Activated T-helper 1 cell treated with anti-CD3 and anti-CD28 coated beads, Interleukin-12 subunit alpha, Interleukin-12 subunit beta, Interleukin-2, Interleukin-4 antibody, amounts not matched to agents 30 ng/mL and 10 ng/mL and 1 ng/mL, durations not matched to agents 14 hours and 24 hours and 36 hours (primary cell): ENCODE measurements at regions of chr3 and their contacts with region 1.

Region 1: GRCh38 chr3:186953011-186953487 is 22.7 kb downstream of the ST6GAL1 start:
- DNase-seq: peak; percentile 16
- H3K4me3 Mint-ChIP-seq: peak overlapping the region; percentile 59
- H3K27ac Mint-ChIP-seq: peak overlapping the region; percentile 89
- H3K4me1 Mint-ChIP-seq: peaks cover 83% of the 10 kb centered on the region
- H3K27me3 Mint-ChIP-seq: no peaks in the 10 kb centered on the region

Region 2: GRCh38 chr3:185813691-185814215 is 1139.3 kb before region 1 on chr3:
- intact Hi-C with region 1: no loop called
- DNase-seq: no peak
- H3K4me3 Mint-ChIP-seq: no peak overlapping the region
- H3K27ac Mint-ChIP-seq: no peak overlapping the region
- H3K4me1 Mint-ChIP-seq: no peaks in the 10 kb centered on the region
- H3K27me3 Mint-ChIP-seq: peaks cover 47% of the 10 kb centered on the region

Region 3: GRCh38 chr3:186985661-186986364 is 32.8 kb after region 1 on chr3:
- intact Hi-C with region 1: loop called (anchors 5 kb)
- DNase-seq: no peak
- H3K4me3 Mint-ChIP-seq: no peak overlapping the region
- H3K27ac Mint-ChIP-seq: no peak overlapping the region
- H3K4me1 Mint-ChIP-seq: peaks cover 28% of the 10 kb centered on the region
- H3K27me3 Mint-ChIP-seq: no peaks in the 10 kb centered on the region

Region 4: DNA sequence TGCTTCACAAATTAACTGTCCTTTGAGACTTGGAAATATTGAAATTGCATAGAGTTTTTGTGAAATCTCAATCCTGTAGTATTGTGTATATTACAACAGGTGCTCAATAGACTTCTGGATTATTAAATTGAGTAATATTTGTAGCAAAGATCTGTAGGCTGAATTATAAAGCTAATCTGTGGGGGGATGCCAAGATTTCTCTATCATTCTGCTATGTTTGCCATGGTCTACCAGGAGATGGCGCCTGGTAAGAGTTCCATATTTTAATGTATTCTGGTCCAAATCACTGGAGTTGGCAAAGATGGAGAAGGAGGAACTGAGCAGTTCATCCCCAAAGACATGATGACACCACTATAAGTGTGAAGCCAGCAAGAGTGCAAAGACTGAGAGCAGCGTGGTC is 1877.8 kb after region 1 on chr3:
- intact Hi-C with region 1: no loop called
- DNase-seq: no peak
- H3K4me3 Mint-ChIP-seq: no peak overlapping the region
- H3K27ac Mint-ChIP-seq: no peak overlapping the region
- H3K4me1 Mint-ChIP-seq: peaks cover 10% of the 10 kb centered on the region
- H3K27me3 Mint-ChIP-seq: no peaks in the 10 kb centered on the region